ENCODE measurements at regions of chr20 and their contacts with region 1.

Region 1: DNA sequence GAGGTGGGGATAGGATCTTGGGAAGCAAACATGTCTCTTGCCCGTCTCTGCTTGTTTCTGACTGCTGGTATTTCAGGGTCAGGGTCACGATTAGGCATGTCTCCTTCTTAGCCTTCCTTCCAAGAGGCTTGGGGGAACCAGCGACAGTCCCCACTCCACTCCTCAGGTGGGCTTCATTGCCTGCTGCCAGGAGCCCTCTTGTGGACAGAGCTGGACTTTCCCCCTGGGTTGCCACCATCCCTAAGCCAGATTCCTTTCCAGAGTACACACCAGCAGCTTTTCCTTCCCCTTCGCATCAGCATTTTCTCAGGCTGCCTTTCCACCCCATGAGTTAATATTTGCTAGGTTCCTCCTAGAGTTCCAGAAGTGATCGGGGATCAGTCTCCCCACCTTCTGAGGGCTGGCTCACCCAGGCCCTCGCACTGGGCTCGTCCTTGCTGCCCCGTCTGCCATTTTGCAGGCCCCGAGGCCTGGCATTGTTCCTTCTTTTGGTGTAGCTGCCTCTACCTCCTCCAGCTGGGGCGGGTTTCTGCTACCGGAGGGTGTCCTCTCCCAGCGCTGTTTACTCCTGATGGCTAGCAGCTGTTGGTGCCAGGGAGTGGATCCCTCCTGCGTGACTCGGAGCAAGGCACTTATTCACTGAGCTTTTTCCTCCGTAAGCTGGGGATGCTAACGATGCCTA is 8.8 kb upstream of the C20orf144 start:
- DNase-seq: peak; percentile 34
- H3K4me3 ChIP-seq: no peak overlapping the region
- H3K27ac ChIP-seq: no peak overlapping the region
- H3K4me1 ChIP-seq: peaks cover 2% of the 10 kb centered on the region
- H3K27me3 ChIP-seq: no peaks in the 10 kb centered on the region
- CTCF ChIP-seq: peak; percentile 82

Region 2: DNA sequence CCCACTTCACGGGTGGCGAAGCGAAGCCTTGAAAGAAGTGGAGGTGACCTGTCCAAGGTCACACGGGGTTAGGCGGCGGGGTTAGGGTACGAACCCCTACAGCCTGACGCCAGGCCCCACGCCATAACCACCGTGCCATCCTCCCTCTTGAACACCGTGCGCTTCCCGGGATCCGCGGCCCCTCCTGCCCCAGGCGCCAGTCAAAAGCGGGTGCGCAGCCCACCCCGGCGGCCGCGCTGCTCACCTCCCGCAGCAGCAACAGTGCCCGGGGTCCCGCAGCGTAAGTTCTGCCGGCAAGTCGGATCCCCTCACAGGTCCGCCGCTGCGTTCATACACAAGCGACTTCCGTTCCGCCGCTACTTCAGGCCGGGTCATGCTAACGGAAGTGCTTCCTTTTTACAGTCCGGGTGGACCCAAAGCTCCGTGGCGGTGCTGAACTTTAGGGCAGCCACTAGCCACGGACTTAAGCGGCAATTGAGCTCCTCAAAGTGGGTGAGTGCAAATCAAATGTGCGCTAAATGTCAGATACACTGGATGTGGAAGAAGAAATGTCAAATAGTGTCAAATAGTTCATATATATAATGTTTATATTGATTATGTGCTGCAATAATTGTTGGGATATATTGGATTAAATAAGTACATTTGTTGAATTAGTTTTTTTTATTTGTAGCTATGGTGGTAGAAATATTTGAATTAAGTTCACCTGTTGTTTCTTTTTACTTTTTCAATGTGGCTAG is 252.0 kb before region 1 on chr20 and contains the start of gene CDK5RAP1:
- CTCF ChIA-PET with region 1: no interaction called
- dilution Hi-C with region 1: no loop called
- in situ Hi-C with region 1: no loop called
- intact Hi-C with region 1: loop called (anchors 5 kb)
- DNase-seq: peak; percentile 83
- H3K4me3 ChIP-seq: peak within 1 kb of the TSS; percentile 76 to 91 (median 80)
- H3K27ac ChIP-seq: peak within 1 kb of the TSS; percentile 42
- H3K4me1 ChIP-seq: peaks cover 26% of the 10 kb centered on the region
- H3K27me3 ChIP-seq: no peaks in the 10 kb centered on the region
- CTCF ChIP-seq: no peak
- total RNA-seq, gene CDK5RAP1: 20.7 to 35.5 TPM

Region 3: DNA sequence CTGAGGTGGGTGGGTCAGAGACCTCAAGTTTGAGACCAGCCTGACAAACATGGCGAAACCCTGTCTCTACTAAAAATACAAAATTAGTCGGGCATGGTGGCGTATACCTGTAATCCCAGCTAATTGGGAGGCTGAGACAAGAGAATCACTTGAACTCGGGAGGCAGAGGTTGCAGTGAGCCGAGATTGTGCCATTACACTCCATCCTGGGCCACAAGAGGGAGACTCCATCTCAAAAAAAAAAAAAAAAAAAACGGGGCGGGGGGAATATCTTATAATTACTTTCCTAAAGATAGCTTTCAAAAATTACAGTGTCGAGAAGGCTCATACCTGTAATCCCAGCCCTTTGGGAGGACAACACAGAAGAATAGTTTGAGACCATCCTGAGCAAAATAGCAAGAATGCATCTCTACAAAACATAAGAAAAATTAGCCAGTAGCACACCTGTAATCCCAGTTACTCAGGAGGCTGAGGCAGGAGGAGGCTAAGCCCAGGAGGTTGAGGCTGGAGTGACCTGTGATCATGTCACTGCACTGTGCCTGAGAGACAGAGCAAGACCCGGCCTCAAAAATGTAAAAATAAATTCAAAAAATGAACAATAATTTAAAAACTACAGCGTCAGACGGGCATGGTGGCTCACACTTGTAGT is 137.7 kb before region 1 on chr20:
- CTCF ChIA-PET with region 1: no interaction called
- dilution Hi-C with region 1: no loop called
- in situ Hi-C with region 1: no loop called
- intact Hi-C with region 1: loop called (anchors 1 kb)
- DNase-seq: no peak
- H3K4me3 ChIP-seq: no peak overlapping the region
- H3K27ac ChIP-seq: no peak overlapping the region
- H3K4me1 ChIP-seq: no peaks in the 10 kb centered on the region
- H3K27me3 ChIP-seq: no peaks in the 10 kb centered on the region
- CTCF ChIP-seq: peak; percentile 11 to 27